ENCODE measurements at regions of chr20 and their contacts with region 1.

Region 1: DNA sequence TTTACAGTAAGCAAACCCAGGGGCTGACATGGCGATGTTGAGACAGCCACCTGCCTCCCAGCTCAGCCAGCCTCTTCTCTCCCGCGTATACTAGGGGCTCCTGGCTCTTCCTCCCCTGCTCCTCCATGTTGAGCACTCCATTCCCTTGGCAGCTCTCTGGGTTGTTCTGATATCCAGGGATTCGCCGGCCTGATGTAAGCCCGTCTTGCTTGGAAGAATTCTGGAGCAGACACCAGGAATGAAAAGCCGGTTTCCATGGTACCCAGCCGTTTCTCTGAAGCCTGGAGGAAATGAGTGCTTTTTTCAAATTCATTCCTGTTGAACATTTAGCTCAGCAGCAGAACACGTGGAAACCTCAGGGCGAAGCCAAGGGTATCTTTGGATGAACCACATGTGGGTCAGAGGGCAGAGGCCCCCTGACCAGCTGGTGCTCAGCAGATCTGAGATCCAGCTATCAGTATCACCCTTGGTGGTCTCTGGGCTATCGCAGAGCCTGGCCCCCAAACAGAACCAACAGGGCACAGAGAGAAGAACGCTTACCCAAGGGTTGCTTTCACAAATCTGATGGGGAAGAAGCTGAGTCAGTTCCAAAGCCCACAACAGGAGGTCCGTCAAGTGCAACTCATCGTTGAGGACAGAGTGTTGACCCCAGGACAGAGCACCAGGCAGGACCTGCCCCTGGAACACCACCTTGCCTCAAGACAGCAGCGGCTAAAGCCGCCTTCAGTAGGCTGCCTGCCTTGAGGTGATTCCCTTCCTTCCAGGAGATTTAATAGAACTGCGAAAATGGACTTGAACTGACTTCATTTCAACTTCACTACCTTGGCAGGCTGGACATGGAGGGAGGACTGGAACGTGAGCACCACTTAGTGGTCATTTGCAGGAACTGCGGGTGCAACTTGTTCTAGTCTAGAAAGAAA is 96.1 kb upstream of the RIN2 start:
- DNase-seq: peak; percentile 52 to 95 (median 71)

Region 2: DNA sequence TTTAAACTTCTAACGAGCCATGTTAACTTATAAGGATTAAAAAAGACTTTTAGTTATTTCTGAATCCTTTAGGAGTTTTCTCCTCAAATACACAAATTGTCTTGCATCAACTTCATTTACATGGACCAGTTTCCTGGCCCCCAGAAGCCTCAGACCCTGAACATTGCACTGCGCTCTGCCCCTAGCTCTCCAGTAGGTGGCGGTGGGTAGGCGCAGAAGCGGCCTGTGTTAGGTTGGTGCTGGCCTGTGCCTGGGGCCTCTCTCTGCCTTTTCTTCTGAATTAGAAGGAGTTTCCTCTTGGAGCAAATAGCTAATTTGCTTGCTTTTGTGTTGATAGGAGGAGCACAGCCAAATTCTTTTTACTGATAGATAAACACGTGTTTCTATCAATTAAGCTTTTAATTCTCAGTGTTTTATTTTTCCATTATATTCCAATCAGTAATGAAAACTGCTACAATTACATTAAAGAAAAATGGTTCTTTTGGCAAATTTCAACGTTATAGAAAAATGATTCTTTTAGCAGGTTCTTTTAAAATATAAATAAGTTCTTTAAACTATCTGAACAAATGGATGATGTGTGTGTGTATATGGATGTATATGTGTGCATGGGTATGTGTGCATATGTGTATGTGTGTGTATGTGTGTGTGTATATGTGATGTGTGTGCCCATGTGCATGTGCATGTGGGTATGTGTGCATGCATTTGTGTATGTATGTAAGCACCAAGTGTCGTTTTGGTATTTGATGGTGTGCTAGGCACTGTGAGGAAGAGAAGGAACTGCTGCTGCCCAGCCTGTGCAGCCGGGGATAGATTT is 1029.6 kb before region 1 on chr20:
- intact Hi-C with region 1: loop called (anchors 1 kb)
- DNase-seq: peak; percentile 61 to 97 (median 81)

Region 3: DNA sequence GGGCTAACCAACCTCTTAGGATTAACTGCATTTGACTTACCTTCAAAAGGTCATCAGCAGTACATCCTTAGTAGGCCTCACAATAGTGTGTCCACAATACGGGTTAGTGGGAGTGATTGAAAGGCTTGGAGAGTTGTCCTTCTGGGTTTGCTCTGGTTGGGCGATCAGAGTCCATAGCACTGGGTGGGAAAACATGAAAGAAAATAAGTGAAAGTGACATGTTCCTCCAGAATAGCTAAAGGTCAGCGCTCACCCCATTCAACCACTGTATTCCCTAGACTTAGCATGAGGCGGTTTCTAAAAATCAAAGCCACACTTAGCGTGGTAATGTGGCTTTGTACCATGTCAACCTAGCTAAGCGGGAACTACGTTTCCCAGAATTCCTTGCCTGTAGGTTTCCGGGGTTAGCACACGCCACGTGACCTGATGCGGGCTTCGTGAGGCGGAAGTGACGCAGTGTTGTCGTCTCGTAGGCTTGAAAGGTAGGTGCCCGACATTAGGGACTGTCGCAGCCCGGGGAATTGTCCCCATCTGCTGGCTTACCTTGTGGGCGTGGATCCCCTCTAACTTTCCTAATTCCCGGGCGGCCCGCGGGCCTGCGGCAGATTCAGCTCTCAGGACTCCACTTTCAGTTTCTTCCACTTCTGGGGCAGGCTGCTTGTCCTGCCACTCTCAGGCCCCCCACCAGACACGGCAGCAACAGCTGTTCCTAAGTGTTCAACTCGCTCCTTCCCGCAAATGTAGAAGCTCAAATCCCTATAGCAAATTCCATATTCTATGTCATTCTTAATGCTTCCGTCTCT is 868.2 kb before region 1 on chr20:
- intact Hi-C with region 1: loop called (anchors 10 kb)
- DNase-seq: peak; percentile 84 to 98 (median 92)

Region 4: DNA sequence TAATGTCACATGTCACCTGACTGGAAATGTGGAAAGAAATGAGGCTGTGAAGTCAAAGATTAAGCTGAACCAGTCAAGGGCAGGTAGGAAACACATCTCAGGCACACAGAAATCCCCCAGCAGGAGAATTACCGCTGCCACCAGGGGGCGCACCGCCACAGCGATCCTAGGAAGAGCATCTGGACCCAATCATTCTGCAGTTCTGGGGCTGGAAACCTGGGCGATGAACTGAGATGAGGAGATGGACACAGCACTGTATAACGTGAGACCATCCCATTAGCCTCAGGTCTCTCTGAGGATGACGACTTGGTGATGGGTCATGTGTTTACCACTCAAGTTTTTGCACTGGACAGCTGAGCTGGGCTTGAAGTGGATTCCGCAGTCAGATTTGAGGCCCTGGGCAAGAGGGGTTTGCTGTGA is 456.0 kb before region 1 on chr20:
- intact Hi-C with region 1: loop called (anchors 1 kb)
- DNase-seq: peak; percentile 29 to 94 (median 72)

Region 5: GRCh38 chr20:19598117-19598850 is 63.7 kb before region 1 on chr20:
- intact Hi-C with region 1: loop called (anchors 10 kb)
- DNase-seq: no peak

Measured in posterior cingulate gyrus (tissue), 11 donors.